ENCODE measurements at regions of chr17 and their contacts with region 1.

Region 1: DNA sequence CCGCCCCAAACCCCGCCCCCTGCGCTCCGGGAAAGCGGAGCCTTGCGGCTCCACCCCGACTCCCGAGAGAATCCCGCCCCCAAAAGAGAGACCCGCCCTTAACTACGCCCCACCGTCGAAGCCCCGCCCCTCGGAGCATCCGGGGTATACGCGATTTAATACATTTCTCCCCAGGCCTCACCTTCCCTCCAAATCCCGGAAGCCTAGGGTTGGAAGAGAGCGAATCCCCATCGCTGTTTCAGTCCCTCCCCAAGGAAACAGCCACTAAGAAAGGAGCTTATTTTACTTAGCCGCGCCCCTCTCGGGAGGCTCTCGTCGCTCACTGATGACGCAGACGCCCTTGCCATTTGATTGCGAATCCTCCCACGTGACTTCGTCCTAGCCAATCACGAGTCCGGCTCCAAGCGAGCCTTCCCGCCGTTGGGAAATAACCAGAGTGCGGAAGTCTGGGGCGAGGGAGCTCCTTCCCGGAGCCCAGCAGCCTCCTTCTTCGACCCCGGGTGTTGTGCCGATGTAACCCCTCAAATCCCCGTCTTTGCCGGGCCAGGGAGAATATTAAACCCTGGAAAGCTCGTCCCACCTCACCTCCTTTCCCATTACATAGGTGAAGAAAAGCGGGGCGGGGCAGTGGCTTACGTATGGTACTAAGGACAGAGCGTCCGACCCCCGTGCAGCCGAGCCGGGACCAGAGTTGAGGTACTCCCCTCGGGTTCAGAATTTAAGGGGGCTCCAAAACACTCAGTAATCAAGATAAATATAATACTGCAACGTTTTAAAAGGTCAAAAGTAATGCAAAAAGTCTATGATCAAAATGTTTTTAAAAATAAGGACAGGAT is 462 bp upstream of the FDXR start:
- DNase-seq: peak; percentile 100
- ATAC-seq: peak; percentile 87
- H3K4me3 ChIP-seq: peak overlapping the region; percentile 87 to 96
- H3K27ac ChIP-seq: peak overlapping the region; percentile 94
- H3K4me1 ChIP-seq: peaks cover 14 to 45% of the 10 kb centered on the region in 2 experiments
- H3K27me3 ChIP-seq: no peaks in the 10 kb centered on the region
- CTCF ChIP-seq: no peak
- POLR2A ChIP-seq: peak; percentile 93
- RAD21 ChIP-seq: no peak

Region 2: GRCh38 chr17:74776044-74776977 is 96.9 kb before region 1 on chr17 and contains the start of gene NAT9:
- CTCF ChIA-PET with region 1: no interaction called
- POLR2A ChIA-PET with region 1: interaction called, 6 read pairs
- RAD21 ChIA-PET with region 1: no interaction called
- intact Hi-C with region 1: loop called (anchors 5 kb)
- DNase-seq: peak; percentile 92
- ATAC-seq: peak; percentile 85
- H3K4me3 ChIP-seq: peak within 1 kb of the TSS; percentile 75 to 79
- H3K27ac ChIP-seq: peak within 1 kb of the TSS; percentile 60
- H3K4me1 ChIP-seq: peaks cover 9 to 16% of the 10 kb centered on the region in 2 experiments
- H3K27me3 ChIP-seq: no peaks in the 10 kb centered on the region
- CTCF ChIP-seq: no peak
- POLR2A ChIP-seq: peak; percentile 82
- RAD21 ChIP-seq: no peak
- total RNA-seq, gene NAT9: 88.7 TPM

Region 3: DNA sequence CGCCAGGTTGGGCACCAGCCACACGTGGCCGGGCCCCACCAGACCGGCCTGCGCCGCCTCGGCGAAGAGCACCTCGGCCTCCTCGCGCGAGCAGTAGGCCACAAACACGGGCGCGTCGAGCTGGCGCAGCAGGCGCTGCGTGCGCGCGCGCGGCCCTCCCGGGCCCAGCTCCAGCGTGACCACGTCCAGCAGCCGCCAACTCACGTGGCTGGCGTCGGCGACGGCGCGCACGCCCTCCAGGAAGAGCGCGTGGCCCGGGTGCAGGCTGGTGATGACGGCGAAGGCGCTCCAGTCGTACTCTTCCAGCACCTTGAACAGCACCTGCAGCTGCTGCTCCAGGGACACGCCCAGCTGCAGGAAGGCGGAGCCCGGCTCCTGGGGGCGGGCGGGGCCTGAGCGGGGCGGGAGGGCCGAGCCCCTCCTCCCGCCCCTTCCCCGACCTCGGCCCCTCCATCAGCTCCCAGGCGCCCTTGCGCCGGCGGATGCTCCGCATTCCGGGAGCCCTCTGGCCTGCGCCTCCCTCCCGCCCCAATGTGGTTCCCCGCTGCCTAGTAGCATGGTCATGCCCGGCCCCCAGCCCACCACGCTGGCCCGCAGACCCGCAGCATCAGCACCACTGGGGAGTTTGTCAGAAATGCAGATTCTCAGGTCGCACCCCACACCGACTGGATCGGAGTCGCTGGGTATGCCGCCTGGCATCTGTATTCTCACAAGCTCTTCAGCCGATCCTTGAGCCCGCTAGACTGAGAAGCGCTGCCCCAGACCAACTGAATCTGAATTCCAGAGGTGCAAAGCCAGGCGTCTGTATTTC is 20.8 kb before region 1 on chr17:
- CTCF ChIA-PET with region 1: no interaction called
- POLR2A ChIA-PET with region 1: interaction called, 10 read pairs
- RAD21 ChIA-PET with region 1: no interaction called
- intact Hi-C with region 1: no loop called
- DNase-seq: peak; percentile 27
- ATAC-seq: peak; percentile 82
- H3K4me3 ChIP-seq: no peak overlapping the region
- H3K27ac ChIP-seq: no peak overlapping the region
- H3K4me1 ChIP-seq: peaks cover 0 to 12% of the 10 kb centered on the region in 2 experiments; a peak in 2 of 4 replicates
- H3K27me3 ChIP-seq: no peaks in the 10 kb centered on the region
- CTCF ChIP-seq: no peak
- POLR2A ChIP-seq: no peak
- RAD21 ChIP-seq: no peak

Region 4: DNA sequence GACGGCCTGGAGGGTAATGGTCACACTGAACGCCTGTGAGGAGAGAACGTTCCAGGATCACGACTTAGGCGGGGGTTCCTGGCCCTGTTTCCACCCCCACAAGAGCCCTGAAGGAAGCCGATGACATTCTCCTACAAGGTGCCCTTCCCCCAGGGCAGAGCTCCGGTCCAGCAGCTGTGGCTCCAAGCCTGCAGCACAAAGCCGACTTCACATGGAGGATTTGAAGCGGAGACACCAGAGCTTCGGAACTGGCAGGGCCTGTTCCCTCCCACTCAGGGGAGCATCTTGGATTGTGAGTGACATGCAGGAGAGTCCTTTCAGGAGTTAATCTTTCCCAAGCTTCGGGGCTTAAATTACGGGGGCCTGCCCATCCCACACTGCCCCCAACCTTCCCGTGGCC is 15.2 kb after region 1 on chr17:
- CTCF ChIA-PET with region 1: interaction called, 3 read pairs
- POLR2A ChIA-PET with region 1: interaction called, 12 read pairs
- RAD21 ChIA-PET with region 1: no interaction called
- intact Hi-C with region 1: no loop called
- DNase-seq: no peak
- ATAC-seq: no peak
- H3K4me3 ChIP-seq: no peak overlapping the region
- H3K27ac ChIP-seq: no peak overlapping the region
- H3K4me1 ChIP-seq: no peaks in the 10 kb centered on the region
- H3K27me3 ChIP-seq: no peaks in the 10 kb centered on the region
- CTCF ChIP-seq: no peak
- POLR2A ChIP-seq: no peak
- RAD21 ChIP-seq: no peak

Region 5: GRCh38 chr17:74904687-74905409 is 31.6 kb after region 1 on chr17:
- CTCF ChIA-PET with region 1: no interaction called
- POLR2A ChIA-PET with region 1: interaction called, 15 read pairs
- RAD21 ChIA-PET with region 1: interaction called in 1 of 2 experiments, 3 read pairs
- intact Hi-C with region 1: no loop called
- DNase-seq: no peak
- ATAC-seq: 0 out of 2 replicates have a peak, but pooled peaks have one; percentile 32
- H3K4me3 ChIP-seq: no peak overlapping the region
- H3K27ac ChIP-seq: no peak overlapping the region
- H3K4me1 ChIP-seq: peaks cover 3 to 30% of the 10 kb centered on the region in 2 experiments
- H3K27me3 ChIP-seq: no peaks in the 10 kb centered on the region
- CTCF ChIP-seq: no peak
- POLR2A ChIP-seq: no peak
- RAD21 ChIP-seq: no peak

Region 6: GRCh38 chr17:75006653-75007052 is 133.4 kb after region 1 on chr17:
- CTCF ChIA-PET with region 1: no interaction called
- POLR2A ChIA-PET with region 1: no interaction called
- RAD21 ChIA-PET with region 1: no interaction called
- intact Hi-C with region 1: no loop called
- DNase-seq: no peak
- ATAC-seq: peak; percentile 52
- H3K4me3 ChIP-seq: no peak overlapping the region
- H3K27ac ChIP-seq: no peak overlapping the region
- H3K4me1 ChIP-seq: peaks cover under 1 to 5% of the 10 kb centered on the region in 2 experiments; a peak in 2 of 4 replicates
- H3K27me3 ChIP-seq: no peaks in the 10 kb centered on the region
- CTCF ChIP-seq: peak in 1 of 3 experiments; percentile 47; a peak in 1 of 6 replicates
- POLR2A ChIP-seq: no peak
- RAD21 ChIP-seq: peak; percentile 69